ENCODE measurements at regions of chr17 and their contacts with region 1.

Region 1: DNA sequence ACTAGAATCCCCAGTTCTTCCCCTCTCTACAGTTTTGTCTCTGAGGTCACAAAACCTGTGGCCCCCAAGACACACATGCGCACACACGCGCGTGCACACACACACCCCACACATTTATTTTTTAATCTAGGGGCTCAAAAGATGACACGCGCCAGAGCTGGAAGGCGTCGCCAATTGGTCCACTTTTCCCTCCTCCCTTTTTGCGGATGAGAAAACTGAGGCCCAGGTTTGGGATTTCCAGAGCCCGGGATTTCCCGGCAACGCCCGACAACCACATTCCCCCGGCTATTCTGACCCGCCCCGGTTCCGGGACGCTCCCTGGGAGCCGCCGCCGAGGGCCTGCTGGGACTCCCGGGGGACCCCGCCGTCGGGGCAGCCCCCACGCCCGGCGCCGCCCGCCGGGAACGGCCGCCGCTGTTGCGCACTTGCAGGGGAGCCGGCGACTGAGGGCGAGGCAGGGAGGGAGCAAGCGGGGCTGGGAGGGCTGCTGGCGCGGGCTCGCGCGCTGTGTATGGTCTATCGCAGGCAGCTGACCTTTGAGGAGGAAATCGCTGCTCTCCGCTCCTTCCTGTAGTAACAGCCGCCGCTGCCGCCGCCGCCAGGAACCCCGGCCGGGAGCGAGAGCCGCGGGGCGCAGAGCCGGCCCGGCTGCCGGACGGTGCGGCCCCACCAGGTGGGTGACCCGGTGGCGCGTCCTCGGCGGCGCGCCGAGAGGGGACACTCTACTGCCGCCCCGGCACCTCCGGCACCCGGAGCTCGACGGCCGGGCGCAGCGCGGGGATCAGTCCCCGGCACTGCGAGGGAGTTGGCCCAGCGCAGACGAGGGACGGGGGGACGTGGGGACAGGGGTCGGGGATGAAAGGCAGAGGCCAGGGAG is at the start of gene STAT5A:
- DNase-seq: peak; percentile 83 to 95 (median 93)
- H3K4me3 ChIP-seq: peak within 1 kb of the TSS; percentile 69 to 88 (median 77)
- H3K27ac ChIP-seq: peak within 1 kb of the TSS; percentile 83 to 86
- H3K4me1 ChIP-seq: peaks cover 2 to 51% (median 47%) of the 10 kb centered on the region in 4 experiments
- H3K27me3 ChIP-seq: no peaks in the 10 kb centered on the region

Region 2: GRCh38 chr17:42248351-42249179 is 39.6 kb before region 1 on chr17:
- CTCF ChIA-PET with region 1: interaction called, 12 read pairs
- POLR2A ChIA-PET with region 1: interaction called, 19 read pairs
- DNase-seq: peak; percentile 90 to 97 (median 96)
- H3K4me3 ChIP-seq: peak overlapping the region in 6 of 7 experiments; percentile 37 to 65 (median 56)
- H3K27ac ChIP-seq: peak overlapping the region; percentile 36 to 82
- H3K4me1 ChIP-seq: peaks cover 28 to 77% (median 52%) of the 10 kb centered on the region in 4 experiments
- H3K27me3 ChIP-seq: no peaks in the 10 kb centered on the region

Region 3: GRCh38 chr17:42276359-42276608 is 11.9 kb before region 1 on chr17 and contains the start of gene STAT5B:
- CTCF ChIA-PET with region 1: interaction called, 7 read pairs
- POLR2A ChIA-PET with region 1: interaction called, 23 read pairs
- DNase-seq: peak in 2 of 3 donors; percentile 72 to 85
- H3K4me3 ChIP-seq: peak within 1 kb of the TSS; percentile 68 to 94 (median 86)
- H3K27ac ChIP-seq: peak within 1 kb of the TSS; percentile 67 to 84
- H3K4me1 ChIP-seq: peaks cover 38 to 54% (median 45%) of the 10 kb centered on the region in 4 experiments
- H3K27me3 ChIP-seq: no peaks in the 10 kb centered on the region

Region 4: DNA sequence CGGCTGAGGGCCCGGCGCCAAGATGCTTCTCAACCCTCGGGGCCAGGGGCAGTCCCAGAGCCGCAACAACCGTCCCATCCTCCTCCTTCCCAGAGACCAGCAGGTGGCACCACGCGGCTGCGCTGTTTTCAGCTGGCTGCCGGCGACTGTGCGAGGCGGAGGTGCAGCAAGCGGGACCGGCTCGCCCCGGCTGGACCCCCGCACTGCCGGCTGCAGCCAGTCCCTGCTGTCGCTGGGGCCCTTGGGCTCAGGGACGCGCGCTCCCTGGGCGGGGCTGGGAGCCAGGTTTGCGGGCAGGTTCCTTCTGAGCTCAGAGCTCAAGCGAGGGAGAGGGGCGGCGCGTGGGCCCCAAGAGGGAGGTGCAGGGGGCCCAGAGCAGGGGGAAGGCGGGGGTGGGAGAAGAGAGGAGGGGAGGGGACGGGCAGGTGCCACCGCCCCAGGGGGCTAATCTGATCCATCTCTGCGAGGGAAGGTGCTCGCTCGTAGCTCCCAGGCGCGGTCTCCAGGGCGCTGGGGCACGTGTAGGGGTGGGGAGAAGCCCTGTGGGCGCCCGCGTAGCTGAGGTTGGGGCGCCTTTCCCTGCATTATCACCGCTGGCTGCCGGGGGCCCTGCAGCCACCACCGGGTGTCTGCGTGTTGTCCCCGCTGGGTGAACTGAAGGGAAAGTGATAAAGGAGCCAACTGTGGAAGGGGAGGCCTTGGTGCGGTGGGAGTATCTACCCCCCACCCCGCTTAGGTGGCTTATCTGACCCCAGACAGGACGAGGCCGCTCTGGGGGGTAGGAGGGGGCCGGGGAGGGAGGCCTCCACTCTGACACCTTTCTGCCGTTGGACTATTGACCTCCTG is 24.3 kb after region 1 on chr17:
- CTCF ChIA-PET with region 1: interaction called, 8 read pairs
- POLR2A ChIA-PET with region 1: interaction called, 29 read pairs
- DNase-seq: peak; percentile 90 to 95 (median 93)
- H3K4me3 ChIP-seq: peak overlapping the region in 3 of 7 experiments; percentile 43 to 51 (median 48)
- H3K27ac ChIP-seq: peak overlapping the region; percentile 62 to 99
- H3K4me1 ChIP-seq: peaks cover 24 to 82% (median 74%) of the 10 kb centered on the region in 4 experiments
- H3K27me3 ChIP-seq: no peaks in the 10 kb centered on the region

Region 5: GRCh38 chr17:42347198-42347597 is 59.0 kb after region 1 on chr17:
- CTCF ChIA-PET with region 1: no interaction called
- POLR2A ChIA-PET with region 1: no interaction called
- DNase-seq: no peak
- H3K4me3 ChIP-seq: no peak overlapping the region
- H3K27ac ChIP-seq: no peak overlapping the region
- H3K4me1 ChIP-seq: peaks cover 0 to 7% (median 5%) of the 10 kb centered on the region in 4 experiments
- H3K27me3 ChIP-seq: no peaks in the 10 kb centered on the region

Region 6: GRCh38 chr17:42438600-42439567 is 150.7 kb after region 1 on chr17:
- CTCF ChIA-PET with region 1: no interaction called
- POLR2A ChIA-PET with region 1: no interaction called
- DNase-seq: peak in 2 of 3 donors; percentile 62 to 64
- H3K4me3 ChIP-seq: no peak overlapping the region
- H3K27ac ChIP-seq: no peak overlapping the region
- H3K4me1 ChIP-seq: peaks cover 0 to 18% (median 4%) of the 10 kb centered on the region in 4 experiments
- H3K27me3 ChIP-seq: no peaks in the 10 kb centered on the region